Gastrocnemius medialis (tissue), 4 donors: ENCODE measurements at regions of chr14 and their contacts with region 1.

Region 1: GRCh38 chr14:59483900-59484638 is at the starts of genes JKAMP and L3HYPDH:
- DNase-seq: peak; percentile 95
- ATAC-seq: peak; percentile 93 to 94
- H3K4me3 ChIP-seq: peak within 1 kb of the TSS; percentile 90 to 95 (median 92)
- H3K27ac ChIP-seq: peak within 1 kb of the TSS; percentile 89 to 95 (median 94)
- H3K4me1 ChIP-seq: peaks cover 33 to 37% of the 10 kb centered on the region in 2 donors
- H3K27me3 ChIP-seq: no peaks in the 10 kb centered on the region
- CTCF ChIP-seq: peak; percentile 58 to 78 (median 73)
- POLR2A ChIP-seq: peak; percentile 79 to 83
- total RNA-seq, gene JKAMP: 30.1 to 43.9 (median 34.0) TPM
- total RNA-seq, gene L3HYPDH: 13.0 to 34.6 (median 22.5) TPM

Region 2: GRCh38 chr14:59464486-59465315 is 19.4 kb before region 1 on chr14:
- in situ Hi-C with region 1: no loop called
- intact Hi-C with region 1: loop called (anchors 2 kb)
- DNase-seq: peak; percentile 20 to 36
- ATAC-seq: peak; percentile 73 to 77
- H3K4me3 ChIP-seq: peak overlapping the region; percentile 53 to 81 (median 72)
- H3K27ac ChIP-seq: peak overlapping the region; percentile 36 to 57 (median 55)
- H3K4me1 ChIP-seq: peaks cover 5 to 6% of the 10 kb centered on the region in 2 donors
- H3K27me3 ChIP-seq: no peaks in the 10 kb centered on the region
- CTCF ChIP-seq: peak in 1 of 5 experiments; percentile 11
- POLR2A ChIP-seq: peak in 1 of 2 donors; percentile 10

Region 3: DNA sequence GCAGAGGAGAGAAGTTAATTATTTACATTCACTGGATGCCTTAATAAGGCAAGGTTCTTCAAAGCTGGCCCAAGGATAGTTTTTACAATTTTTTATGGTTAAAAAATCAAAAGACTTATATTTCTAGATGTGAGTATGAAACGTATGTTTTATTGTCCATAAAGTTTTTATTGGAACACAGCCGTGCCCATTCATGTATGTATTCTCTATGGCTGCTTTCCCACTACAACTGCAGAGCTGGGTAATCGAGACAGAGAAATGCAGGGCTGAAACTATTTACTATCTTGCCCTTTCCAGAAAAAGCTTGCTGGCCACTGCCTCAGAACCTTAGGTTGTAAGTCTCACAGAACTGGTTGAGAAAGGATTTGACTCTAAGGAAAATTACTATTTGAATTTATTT is 16.7 kb after region 1 on chr14:
- in situ Hi-C with region 1: no loop called
- intact Hi-C with region 1: loop called (anchors 2 kb)
- DNase-seq: no peak
- ATAC-seq: no peak
- H3K4me3 ChIP-seq: no peak overlapping the region
- H3K27ac ChIP-seq: no peak overlapping the region
- H3K4me1 ChIP-seq: peaks cover 7 to 13% of the 10 kb centered on the region in 2 donors
- H3K27me3 ChIP-seq: no peaks in the 10 kb centered on the region
- CTCF ChIP-seq: no peak
- POLR2A ChIP-seq: no peak